ENCODE measurements at regions of chr10 and their contacts with region 1.

Region 1: DNA sequence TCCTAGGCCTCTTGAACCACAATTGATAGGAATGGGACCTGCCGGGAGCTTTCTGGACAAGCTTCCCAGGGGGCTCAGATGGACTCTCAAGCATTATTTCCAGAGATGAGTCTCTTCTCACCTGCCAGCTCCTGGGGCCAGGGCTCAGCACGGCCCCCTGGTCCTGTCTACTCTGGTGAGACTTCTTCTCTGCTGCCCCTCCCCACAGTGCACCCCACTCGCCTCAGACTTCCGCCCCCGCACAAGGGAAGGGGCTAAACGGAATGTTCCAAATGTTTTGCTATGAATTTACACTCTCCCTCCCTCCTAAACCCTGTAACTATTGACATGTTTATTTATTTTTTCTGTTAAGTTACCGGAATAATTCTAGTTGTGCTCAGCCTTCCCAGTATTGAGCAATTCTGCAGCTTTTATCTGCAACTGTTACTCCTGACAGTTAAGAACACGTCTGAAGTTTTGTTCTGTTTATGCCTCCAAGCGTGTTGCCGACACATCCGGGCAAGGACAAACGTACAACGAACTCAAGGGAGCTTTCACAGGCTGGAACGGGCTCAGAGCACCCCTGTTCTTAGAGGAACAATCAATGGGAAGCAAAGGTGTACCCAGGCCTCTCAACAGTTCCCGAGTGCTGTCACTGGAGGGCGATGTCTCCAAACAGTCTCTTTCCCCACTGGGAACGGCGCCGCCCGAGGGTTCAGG is 55.2 kb downstream of the FHIP2A start:
- H3K4me3 Mint-ChIP-seq: no peak overlapping the region
- H3K27ac Mint-ChIP-seq: no peak overlapping the region
- H3K4me1 Mint-ChIP-seq: peaks cover 46% of the 10 kb centered on the region
- H3K27me3 Mint-ChIP-seq: peaks cover 13% of the 10 kb centered on the region

Region 2: GRCh38 chr10:115129752-115130151 is 253.0 kb after region 1 on chr10:
- intact Hi-C with region 1: loop called (anchors 2 kb)
- H3K4me3 Mint-ChIP-seq: no peak overlapping the region
- H3K27ac Mint-ChIP-seq: no peak overlapping the region
- H3K4me1 Mint-ChIP-seq: no peaks in the 10 kb centered on the region
- H3K27me3 Mint-ChIP-seq: no peaks in the 10 kb centered on the region

Measured in dendritic cell treated with granulocyte-macrophage colony-stimulating factor and Interleukin-4, amounts not matched to agents 40 ng/mL and 50 ng/mL, for 4 days (primary cell).